PC-9 (cell line): ENCODE measurements at regions of chr1 and their contacts with region 1.

Region 1: DNA sequence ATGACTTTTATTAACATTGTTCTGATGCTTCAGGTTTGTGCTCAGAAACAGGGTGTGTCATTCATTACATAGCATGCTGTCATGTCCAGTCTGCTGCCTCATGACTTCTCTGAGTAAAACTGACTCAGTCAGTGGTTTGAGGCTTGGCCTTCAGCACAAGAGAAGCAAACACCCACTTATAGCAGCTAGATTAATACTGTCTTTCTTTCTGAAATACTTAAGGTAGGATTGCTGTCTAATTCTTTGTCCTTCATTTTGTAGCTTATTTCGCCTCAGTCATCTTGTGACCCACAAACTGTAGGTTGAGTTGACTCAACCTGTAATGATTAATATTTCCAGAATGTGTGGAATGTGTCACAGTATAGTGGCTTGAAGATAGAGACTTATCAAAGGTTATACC is 32.9 kb downstream of the RASAL2 start:
- DNase-seq: peak; percentile 55 to 92
- H3K4me3 ChIP-seq: peak overlapping the region; percentile 9; the same call in 1 of the 2 replicates
- H3K27ac ChIP-seq: peak overlapping the region; percentile 90
- H3K4me1 ChIP-seq: peaks cover 45% of the 10 kb centered on the region
- H3K27me3 ChIP-seq: no peaks in the 10 kb centered on the region
- CTCF ChIP-seq: no peak

Region 2: DNA sequence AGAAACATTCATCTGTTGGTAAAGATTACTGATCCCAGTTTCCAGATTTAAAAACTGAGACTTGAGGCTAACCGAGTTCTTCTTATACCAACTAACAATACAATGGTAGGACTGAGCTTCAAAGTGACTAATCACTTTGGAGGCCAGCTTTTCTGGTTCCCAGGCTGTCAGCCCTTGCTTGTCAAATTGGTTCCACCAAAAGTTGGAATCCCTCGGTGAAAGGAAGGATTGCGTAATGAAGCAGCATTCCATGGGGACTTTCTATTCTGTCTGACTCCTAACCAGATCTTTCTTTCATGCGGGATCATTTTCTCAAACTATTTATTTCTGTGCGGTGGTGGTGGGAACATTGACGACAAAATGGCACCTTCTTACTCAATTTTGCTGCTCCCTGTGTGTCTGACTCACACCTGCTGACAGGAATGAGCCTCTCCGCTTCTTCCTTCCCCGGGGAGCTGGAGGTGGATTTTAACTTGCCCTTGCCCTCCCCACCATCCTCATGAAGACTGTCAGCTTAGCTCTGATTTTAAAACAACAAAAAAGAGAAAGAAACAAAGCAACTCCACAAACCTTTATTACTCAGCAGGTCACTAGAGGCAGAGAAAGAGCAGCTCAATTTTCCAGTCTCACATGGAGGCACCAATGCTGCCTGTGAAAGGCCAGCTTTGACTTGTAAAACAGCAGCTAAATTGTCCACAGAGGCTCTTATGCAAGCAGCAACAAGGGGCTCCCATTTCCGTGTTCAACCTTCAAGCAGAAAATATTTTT is 65.8 kb before region 1 on chr1:
- CTCF ChIA-PET with region 1: interaction called, 3 read pairs
- POLR2A ChIA-PET with region 1: interaction called, 3 read pairs
- intact Hi-C with region 1: loop called (anchors 2 kb)
- DNase-seq: peak; percentile 51 to 91
- H3K4me3 ChIP-seq: peak overlapping the region; percentile 36; the same call in 1 of the 2 replicates
- H3K27ac ChIP-seq: peak overlapping the region; percentile 87
- H3K4me1 ChIP-seq: peaks cover 39% of the 10 kb centered on the region
- H3K27me3 ChIP-seq: no peaks in the 10 kb centered on the region
- CTCF ChIP-seq: no peak

Region 3: GRCh38 chr1:178189814-178190213 is 63.0 kb after region 1 on chr1:
- CTCF ChIA-PET with region 1: no interaction called
- POLR2A ChIA-PET with region 1: no interaction called
- intact Hi-C with region 1: loop called (anchors 2 kb)
- DNase-seq: no peak
- H3K4me3 ChIP-seq: no peak overlapping the region
- H3K27ac ChIP-seq: no peak overlapping the region
- H3K4me1 ChIP-seq: peaks cover 8% of the 10 kb centered on the region; the same call in 1 of the 2 replicates
- H3K27me3 ChIP-seq: no peaks in the 10 kb centered on the region
- CTCF ChIP-seq: peak; percentile 52

Region 4: DNA sequence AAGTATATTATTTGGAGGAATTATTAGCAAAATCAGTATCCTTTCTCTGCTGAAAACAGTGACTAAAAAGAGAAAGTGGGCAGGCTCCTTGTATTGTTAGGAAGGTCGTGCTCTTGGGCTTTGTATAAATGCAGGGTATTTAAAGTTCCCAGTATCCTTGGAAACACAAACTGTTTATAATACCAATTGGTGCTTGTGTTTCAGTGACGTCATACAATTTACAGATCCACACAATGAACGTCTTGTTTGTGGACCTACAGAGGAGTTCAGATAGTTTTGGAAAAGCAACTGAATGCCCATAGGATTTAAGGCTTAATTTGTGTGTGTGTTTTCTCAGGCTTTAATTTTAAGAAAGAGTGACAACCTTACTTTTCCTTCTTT is 135.3 kb after region 1 on chr1:
- CTCF ChIA-PET with region 1: no interaction called
- POLR2A ChIA-PET with region 1: no interaction called
- intact Hi-C with region 1: loop called (anchors 10 kb)
- DNase-seq: peak in 1 of 2 experiments; percentile 38
- H3K4me3 ChIP-seq: no peak overlapping the region
- H3K27ac ChIP-seq: no peak overlapping the region
- H3K4me1 ChIP-seq: peaks cover 11% of the 10 kb centered on the region
- H3K27me3 ChIP-seq: no peaks in the 10 kb centered on the region
- CTCF ChIP-seq: no peak